Sciatic nerve (tissue), 2 donors: ENCODE measurements at regions of chr2 and their contacts with region 1.

Region 1: GRCh38 chr2:82215212-82215611 is 1910.7 kb upstream of the LRRTM1 start:
- DNase-seq: no peak
- ATAC-seq: no peak

Region 2: GRCh38 chr2:80330527-80331450 is 1884.4 kb before region 1 on chr2:
- intact Hi-C with region 1: no loop called
- DNase-seq: no peak
- ATAC-seq: no peak

Region 3: DNA sequence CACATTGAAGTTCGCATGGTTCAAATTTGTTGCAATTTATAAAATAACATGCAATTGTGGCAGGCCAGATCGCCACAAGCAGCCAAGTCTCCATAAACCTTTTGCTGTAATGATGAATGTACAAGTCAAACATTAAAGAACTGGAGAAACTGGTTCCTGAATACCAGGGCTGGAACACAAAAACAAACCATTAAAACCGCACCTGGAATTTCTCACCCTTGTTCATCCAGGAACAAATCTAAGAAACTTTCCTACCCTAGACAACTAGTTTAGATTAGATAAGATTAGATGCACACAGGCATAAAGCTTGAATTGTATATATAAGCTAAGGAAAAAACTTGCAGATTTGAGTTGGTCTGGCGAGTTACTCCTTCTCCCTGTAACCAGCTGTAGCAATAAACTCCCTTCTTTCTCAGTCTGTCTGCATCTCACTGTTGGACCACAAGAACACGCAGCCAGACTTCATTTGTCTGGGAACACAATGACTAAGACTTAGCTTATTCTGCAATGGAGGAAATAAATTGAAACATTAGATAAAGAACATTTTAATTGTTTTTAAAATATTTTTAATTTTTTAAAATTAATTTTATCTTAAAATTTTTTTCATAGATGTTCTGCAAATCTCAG is 75.1 kb before region 1 on chr2:
- intact Hi-C with region 1: no loop called
- DNase-seq: no peak
- ATAC-seq: no peak

Region 4: GRCh38 chr2:83006961-83007360 is 791.7 kb after region 1 on chr2:
- intact Hi-C with region 1: no loop called
- DNase-seq: no peak
- ATAC-seq: no peak

Region 5: DNA sequence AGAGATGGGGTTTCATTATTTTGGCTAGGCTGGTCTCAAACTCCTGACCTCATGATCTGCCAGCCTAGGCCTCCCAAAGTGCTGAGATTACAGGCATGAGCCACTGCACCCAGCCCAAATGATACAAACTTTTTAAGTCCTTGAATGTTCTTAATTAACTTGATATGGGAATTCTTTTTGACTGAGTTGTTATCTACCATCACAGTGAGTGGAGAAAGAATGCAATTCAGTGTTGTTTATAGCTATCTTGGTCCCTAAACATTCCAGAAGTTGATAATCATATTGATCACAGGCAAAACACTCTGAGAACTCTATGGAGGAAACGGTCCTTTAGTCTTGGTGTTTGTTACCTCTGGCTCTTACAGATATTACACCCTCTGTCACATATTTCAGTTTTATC is 1171.3 kb after region 1 on chr2:
- intact Hi-C with region 1: no loop called
- DNase-seq: no peak
- ATAC-seq: no peak

Region 6: DNA sequence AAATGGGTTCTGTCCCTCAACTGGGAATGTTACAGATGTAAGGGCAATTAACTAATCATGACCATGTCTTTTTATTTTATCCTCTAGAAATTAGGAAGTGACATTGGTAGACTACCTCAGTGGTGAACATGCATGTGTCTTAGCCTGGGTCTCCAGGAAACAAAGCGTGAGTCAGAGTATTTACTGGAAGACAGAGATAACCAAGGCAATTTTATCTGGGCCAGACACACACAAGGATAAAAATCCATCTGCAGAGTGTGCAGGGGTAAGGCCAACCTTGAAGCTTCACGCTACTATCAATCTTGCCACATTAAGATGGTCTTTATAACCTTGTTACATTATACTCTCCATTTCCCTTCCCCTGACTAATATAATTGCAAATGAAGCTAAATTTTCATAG is 1756.3 kb after region 1 on chr2:
- intact Hi-C with region 1: loop called (anchors 5 kb)
- DNase-seq: no peak
- ATAC-seq: no peak